ENCODE measurements at regions of chrX and their contacts with region 1.

Region 1: GRCh38 chrX:109890895-109891502 is 111.9 kb upstream of the TMEM164 start:
- H3K4me3 ChIP-seq: no peak overlapping the region
- H3K27ac ChIP-seq: no peak overlapping the region
- H3K4me1 ChIP-seq: no peaks in the 10 kb centered on the region
- CTCF ChIP-seq: peak; percentile 58

Region 2: DNA sequence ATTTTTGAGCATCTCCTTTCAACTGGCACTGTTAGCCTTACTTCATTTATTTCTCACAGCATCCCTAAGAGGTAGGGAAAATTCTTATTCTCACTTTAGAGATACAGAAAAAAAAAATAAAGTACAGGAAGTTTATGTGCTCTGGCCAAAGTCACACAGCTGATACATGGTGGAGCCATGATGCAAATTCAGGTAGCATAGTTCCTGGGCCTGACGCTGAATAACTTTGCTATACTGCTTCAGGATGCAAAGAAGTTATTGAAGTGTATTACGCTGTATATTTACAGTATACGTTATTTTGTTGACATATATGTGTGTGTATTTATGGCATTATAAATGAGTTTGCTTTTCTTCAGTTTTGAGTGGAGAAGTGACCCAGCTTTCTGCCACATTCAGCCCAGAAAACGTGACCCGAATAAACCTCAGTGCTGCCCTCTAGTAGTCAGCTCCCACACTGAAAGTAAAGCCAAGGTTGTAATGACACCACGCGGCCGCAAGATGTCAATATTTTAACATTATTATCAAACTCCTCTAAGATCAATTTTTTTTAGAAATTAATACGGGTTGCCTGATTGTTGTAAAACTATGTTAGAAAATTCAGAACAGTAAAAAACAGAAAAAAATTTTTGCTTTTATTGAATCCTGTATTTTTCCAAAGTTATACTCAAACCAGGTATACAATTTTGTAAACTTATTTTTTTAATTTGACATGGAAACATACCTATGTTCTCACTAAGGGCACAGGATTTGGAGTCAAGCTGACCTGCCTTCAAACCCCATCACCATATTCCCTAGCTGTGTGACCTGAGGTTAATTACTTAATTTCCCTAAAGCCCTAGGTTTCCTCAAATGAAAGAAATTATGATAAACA is 405.3 kb before region 1 on chrX:
- CTCF ChIA-PET with region 1: interaction called, 29 read pairs
- POLR2A ChIA-PET with region 1: no interaction called
- H3K4me3 ChIP-seq: no peak overlapping the region
- H3K27ac ChIP-seq: no peak overlapping the region
- H3K4me1 ChIP-seq: no peaks in the 10 kb centered on the region
- CTCF ChIP-seq: peak; percentile 84

Region 3: DNA sequence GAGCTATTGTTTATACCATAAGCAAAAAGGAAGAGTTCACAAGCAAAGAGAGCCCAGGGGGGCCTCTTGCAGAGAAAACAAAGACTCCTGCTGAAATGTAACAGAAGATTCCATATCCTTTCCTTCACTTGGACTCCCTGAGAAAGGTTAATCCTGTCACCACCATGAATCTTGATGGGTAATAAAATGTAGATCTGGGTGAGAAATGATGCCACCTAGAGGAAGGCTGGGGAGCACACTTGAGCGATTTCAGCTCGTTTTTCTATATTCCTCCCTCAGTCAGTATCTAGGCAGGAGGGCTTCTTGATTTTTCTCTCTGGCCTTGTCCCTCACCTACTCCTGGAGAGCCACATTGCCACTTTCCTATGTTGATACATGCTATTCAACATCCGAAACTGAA is 255.8 kb before region 1 on chrX:
- CTCF ChIA-PET with region 1: interaction called, 15 read pairs
- POLR2A ChIA-PET with region 1: no interaction called
- H3K4me3 ChIP-seq: no peak overlapping the region
- H3K27ac ChIP-seq: no peak overlapping the region
- H3K4me1 ChIP-seq: no peaks in the 10 kb centered on the region
- CTCF ChIP-seq: 0 out of 2 replicates have a peak, but pooled peaks have one; percentile 7

Region 4: DNA sequence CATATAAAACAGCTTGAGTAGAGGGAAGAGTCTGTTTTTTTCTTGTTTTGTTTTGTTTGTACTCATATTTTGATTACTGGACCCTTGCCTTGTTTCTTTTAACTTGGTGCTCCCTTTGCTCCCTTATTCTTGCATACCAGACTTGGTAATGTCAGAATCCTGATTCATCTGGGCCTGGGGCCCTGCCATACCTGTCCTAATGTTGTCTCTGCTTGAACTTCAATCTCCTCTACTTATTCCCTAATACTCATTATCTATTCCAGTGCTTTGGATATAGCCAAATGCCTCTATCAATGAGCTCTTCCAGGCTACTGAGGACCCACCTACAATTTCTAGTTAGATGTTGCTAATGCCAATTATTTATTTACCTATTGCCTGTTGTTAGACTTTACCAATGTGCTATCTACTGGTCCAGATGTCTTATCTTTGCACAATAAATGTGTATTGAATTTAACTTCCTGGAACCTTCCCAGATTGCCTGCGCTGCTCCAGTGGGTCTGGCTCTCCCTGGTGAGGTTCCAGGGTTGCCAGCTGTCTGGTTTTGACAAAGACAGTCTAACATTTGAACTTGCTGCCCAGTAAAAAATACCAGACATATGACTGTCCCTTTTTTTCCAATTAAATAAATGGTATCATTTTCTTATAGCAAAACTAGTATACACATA is 93.6 kb before region 1 on chrX:
- CTCF ChIA-PET with region 1: no interaction called
- POLR2A ChIA-PET with region 1: no interaction called
- H3K4me3 ChIP-seq: no peak overlapping the region
- H3K27ac ChIP-seq: no peak overlapping the region
- H3K4me1 ChIP-seq: no peaks in the 10 kb centered on the region
- CTCF ChIP-seq: no peak

Region 5: DNA sequence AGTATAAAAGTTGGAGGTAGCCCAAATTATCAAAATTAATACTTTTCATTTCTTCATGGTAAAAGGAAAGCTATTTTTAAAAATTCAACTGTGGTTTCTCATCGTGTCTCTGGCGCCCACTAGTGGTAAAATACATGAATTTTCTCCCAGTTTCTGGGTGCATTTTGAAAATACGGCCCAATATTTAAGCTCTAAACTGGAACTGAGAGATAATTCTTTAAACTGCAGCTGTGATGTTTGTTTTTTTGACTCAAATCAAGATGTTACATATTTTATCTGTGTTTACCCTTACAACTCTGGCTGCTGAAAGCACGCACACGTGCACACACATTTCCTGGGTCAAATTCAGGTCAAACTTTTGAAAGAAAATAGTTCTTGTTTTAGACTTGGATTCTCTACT is 34.0 kb before region 1 on chrX:
- CTCF ChIA-PET with region 1: interaction called, 21 read pairs
- POLR2A ChIA-PET with region 1: no interaction called
- H3K4me3 ChIP-seq: no peak overlapping the region
- H3K27ac ChIP-seq: no peak overlapping the region
- H3K4me1 ChIP-seq: no peaks in the 10 kb centered on the region
- CTCF ChIP-seq: no peak

Region 6: GRCh38 chrX:109880629-109881028 is 10.4 kb before region 1 on chrX:
- CTCF ChIA-PET with region 1: interaction called, 54 read pairs
- POLR2A ChIA-PET with region 1: no interaction called
- H3K4me3 ChIP-seq: no peak overlapping the region
- H3K27ac ChIP-seq: no peak overlapping the region
- H3K4me1 ChIP-seq: no peaks in the 10 kb centered on the region
- CTCF ChIP-seq: no peak

Region 7: DNA sequence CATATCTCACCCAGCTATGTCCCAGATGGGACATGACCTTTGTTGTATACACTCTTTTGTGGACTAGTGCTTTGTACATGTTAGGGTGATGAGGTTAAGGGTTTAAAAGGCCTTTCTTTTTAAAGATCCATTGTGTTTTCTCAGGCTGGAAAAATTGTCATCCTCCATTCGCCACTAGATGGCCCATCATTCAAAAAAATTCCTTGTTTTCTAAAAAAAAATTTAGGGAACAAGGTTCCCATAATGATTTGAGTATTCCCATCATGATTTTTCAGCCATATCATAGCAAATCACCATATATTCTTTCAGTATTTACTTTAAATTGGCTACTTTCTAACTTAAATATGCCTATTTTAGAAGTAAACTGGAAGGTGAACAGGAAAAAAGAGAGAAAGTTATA is 20.0 kb after region 1 on chrX:
- CTCF ChIA-PET with region 1: interaction called, 15 read pairs
- POLR2A ChIA-PET with region 1: no interaction called
- H3K4me3 ChIP-seq: no peak overlapping the region
- H3K27ac ChIP-seq: no peak overlapping the region
- H3K4me1 ChIP-seq: no peaks in the 10 kb centered on the region
- CTCF ChIP-seq: no peak; the same call in 1 of the 2 replicates

Region 8: GRCh38 chrX:110146521-110146920 is 255.5 kb after region 1 on chrX:
- CTCF ChIA-PET with region 1: interaction called, 19 read pairs
- POLR2A ChIA-PET with region 1: interaction called, 4 read pairs
- H3K4me3 ChIP-seq: no peak overlapping the region
- H3K27ac ChIP-seq: no peak overlapping the region
- H3K4me1 ChIP-seq: no peaks in the 10 kb centered on the region
- CTCF ChIP-seq: 0 out of 2 replicates have a peak, but pooled peaks have one; percentile 8